Activated CD4-positive, alpha-beta memory T cell treated with anti-CD3 and anti-CD28 coated beads for 36 hours (primary cell): ENCODE measurements at regions of chr15 and their contacts with region 1.

Region 1: DNA sequence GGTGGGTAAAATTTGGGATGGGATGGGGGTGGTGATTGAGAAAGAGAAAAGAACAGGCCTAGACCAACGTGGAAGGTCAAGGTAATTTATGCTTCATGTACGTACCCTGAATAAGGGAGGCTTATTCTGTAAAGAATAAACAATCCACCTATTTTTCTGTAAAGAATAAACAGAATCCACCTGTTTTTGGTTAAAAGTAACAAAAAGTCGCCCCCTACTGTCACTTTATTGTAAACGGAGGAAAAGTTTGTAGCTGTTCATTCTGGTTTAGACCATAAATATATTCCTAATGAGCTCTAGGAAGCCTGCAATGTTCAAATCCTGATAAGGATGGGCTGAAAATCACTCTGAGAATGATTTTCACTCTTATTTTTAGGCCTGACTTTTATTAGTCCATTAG is 23.5 kb upstream of the SQOR start:
- DNase-seq: no peak
- H3K4me3 Mint-ChIP-seq: no peak overlapping the region
- H3K27ac Mint-ChIP-seq: no peak overlapping the region
- H3K4me1 Mint-ChIP-seq: peaks cover 11% of the 10 kb centered on the region
- H3K27me3 Mint-ChIP-seq: no peaks in the 10 kb centered on the region

Region 2: GRCh38 chr15:45429974-45430792 is 181.1 kb before region 1 on chr15:
- CTCF ChIA-PET with region 1: interaction called, 11 read pairs
- POLR2A ChIA-PET with region 1: no interaction called
- intact Hi-C with region 1: loop called (anchors 1 kb)
- DNase-seq: peak; percentile 87
- H3K4me3 Mint-ChIP-seq: peak overlapping the region; percentile 20
- H3K27ac Mint-ChIP-seq: no peak overlapping the region
- H3K4me1 Mint-ChIP-seq: peaks cover 2% of the 10 kb centered on the region
- H3K27me3 Mint-ChIP-seq: peaks cover 3% of the 10 kb centered on the region

Region 3: DNA sequence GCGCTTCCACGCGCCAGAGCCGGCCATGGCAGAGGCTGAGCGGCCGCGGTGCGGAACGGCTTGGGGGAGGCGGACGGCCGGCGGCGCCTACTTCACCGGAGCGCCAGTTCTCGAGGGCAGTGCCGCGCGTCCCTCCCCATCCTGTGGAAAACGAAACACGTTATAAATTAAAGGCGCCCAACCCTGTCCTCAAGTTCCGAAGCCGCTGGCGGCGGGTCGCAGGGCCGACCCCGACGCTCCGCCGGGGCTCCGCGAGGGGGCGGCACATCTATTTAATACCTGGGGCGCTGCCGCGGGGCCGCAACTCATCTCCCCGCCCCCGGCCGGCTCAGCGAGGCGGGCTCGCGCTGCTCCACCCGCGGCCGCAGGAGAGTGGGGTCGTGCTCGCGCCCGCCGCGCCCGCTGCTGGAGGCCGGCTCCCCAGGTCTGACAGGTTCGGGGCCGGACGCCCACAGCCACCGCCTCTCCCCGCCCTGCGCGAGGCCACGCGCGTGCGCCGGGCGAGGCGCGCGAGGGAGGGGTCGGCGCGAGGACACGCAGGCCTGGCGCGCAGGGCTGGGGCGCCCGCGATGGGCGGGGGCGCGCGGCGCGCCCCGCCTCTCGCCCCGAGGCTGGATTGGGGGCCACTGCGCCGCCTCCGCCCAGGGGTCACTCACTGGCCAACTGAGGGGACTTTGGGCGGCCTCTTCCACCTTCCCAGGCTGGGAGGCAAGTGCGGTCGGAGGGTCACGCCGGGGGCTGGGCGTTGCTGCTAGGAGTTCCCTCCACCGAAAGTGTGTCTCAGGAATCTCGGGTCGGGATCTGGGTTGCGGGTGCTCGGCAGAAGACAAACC is 88.8 kb before region 1 on chr15 and contains the start of gene SLC30A4:
- CTCF ChIA-PET with region 1: interaction called, 3 read pairs
- POLR2A ChIA-PET with region 1: no interaction called
- intact Hi-C with region 1: loop called (anchors 2 kb)
- DNase-seq: peak; percentile 66
- H3K4me3 Mint-ChIP-seq: peak within 1 kb of the TSS; percentile 82
- H3K27ac Mint-ChIP-seq: peak within 1 kb of the TSS; percentile 14
- H3K4me1 Mint-ChIP-seq: peaks cover 21% of the 10 kb centered on the region
- H3K27me3 Mint-ChIP-seq: no peaks in the 10 kb centered on the region
- total RNA-seq, gene SLC30A4: 1.5 to 2.0 TPM